B cell (primary cell): ENCODE measurements at regions of chr15 and their contacts with region 1.

Region 1: DNA sequence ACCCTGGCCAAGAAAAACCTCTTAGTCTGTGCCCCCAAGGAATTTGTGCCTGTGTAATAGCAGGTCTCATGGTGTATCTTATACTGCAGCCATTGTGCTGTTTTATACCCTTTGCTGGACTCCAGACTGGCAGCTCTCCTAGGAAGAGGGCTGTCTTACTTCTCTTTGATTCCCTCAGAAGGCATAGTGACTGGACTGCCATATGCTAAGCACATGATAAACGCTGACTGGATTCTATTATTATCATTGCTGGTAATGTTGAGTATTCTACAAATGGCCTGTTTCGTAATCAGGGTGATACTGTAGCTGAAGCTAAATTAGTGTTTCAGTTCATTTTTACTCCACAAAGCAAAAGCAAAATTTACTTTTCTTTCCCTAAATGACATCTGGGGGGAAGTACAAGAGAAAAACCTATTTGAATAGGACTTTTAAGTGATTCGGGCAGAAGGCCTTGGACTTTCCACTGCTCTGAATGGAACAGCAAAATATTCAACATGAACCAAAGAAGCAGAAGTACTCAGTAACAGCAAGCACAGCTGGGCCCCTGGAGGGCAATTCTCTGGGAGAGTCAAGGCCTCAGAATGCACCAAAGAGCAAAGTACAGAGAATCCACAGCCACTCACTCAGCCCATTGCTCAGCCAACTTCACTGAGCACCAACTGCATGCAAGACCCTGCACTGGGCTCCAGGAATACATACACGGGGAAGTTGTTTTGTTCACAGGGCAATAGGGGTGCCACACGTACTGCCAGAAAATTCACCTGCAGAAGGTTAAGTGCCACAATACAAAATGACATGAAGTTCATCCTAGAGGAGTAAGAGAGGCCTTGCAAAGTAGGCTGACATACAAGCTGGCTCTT is 7.9 kb upstream of the BCL2A1 start:
- DNase-seq: peak; percentile 63
- ATAC-seq: peak; percentile 41
- H3K4me3 ChIP-seq: no peak overlapping the region
- H3K4me3 Mint-ChIP-seq: peak overlapping the region; percentile 87
- H3K27ac ChIP-seq: peak overlapping the region; percentile 57 to 79
- H3K27ac Mint-ChIP-seq: peak overlapping the region; percentile 76
- H3K4me1 ChIP-seq: peaks cover 50 to 55% of the 10 kb centered on the region in 2 donors
- H3K4me1 Mint-ChIP-seq: peaks cover 54% of the 10 kb centered on the region
- H3K27me3 ChIP-seq: peaks cover 0 to 3% (median under 1%) of the 10 kb centered on the region in 4 experiments
- H3K27me3 Mint-ChIP-seq: no peaks in the 10 kb centered on the region
- CTCF ChIP-seq: no peak

Region 2: GRCh38 chr15:79962178-79962577 is 16.7 kb before region 1 on chr15:
- CTCF ChIA-PET with region 1: no interaction called
- POLR2A ChIA-PET with region 1: no interaction called
- intact Hi-C with region 1: loop called (anchors 1 kb)
- DNase-seq: peak; percentile 72
- ATAC-seq: peak; percentile 75
- H3K4me3 ChIP-seq: no peak overlapping the region
- H3K4me3 Mint-ChIP-seq: peak overlapping the region; percentile 51
- H3K27ac ChIP-seq: peak overlapping the region; percentile 42 to 82
- H3K27ac Mint-ChIP-seq: peak overlapping the region; percentile 85
- H3K4me1 ChIP-seq: peaks cover 18 to 25% of the 10 kb centered on the region in 2 donors
- H3K4me1 Mint-ChIP-seq: peaks cover 41% of the 10 kb centered on the region
- H3K27me3 ChIP-seq: no peaks in the 10 kb centered on the region
- H3K27me3 Mint-ChIP-seq: no peaks in the 10 kb centered on the region
- CTCF ChIP-seq: no peak

Region 3: DNA sequence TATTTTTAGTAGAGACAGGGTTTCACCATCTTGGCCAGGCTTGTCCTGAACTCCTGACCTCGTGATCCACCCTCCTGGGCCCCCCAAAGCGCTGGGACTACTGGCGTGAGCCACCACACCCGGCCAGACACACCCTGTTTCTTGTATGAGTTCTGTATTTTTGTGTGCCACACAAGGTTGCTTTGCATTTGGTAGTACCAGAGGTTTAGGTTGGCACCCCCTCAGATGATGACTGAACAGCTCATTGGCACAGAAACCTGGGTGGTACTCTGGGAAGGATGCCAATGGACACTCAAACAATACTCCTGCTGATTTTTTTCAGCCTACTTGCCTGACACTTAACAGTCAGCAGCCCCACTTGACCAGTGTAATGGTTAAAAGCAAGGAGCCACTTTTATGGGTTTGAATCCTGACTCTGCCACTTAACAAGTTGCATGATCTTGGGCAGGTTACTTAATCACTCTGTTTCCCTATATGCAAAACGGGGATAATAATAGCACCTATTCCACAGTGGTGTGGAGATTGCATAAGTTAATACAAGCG is 31.3 kb after region 1 on chr15:
- CTCF ChIA-PET with region 1: interaction called, 5 read pairs
- POLR2A ChIA-PET with region 1: interaction called, 3 read pairs
- intact Hi-C with region 1: loop called (anchors 2 kb)
- DNase-seq: no peak
- ATAC-seq: peak; percentile 59
- H3K4me3 ChIP-seq: peak overlapping the region in 2 of 5 experiments; percentile 6 to 38
- H3K4me3 Mint-ChIP-seq: peak overlapping the region; percentile 42
- H3K27ac ChIP-seq: peak overlapping the region; percentile 71 to 76
- H3K27ac Mint-ChIP-seq: peak overlapping the region; percentile 83
- H3K4me1 ChIP-seq: peaks cover 36 to 42% of the 10 kb centered on the region in 2 donors
- H3K4me1 Mint-ChIP-seq: peaks cover 68% of the 10 kb centered on the region
- H3K27me3 ChIP-seq: no peaks in the 10 kb centered on the region
- H3K27me3 Mint-ChIP-seq: no peaks in the 10 kb centered on the region
- CTCF ChIP-seq: no peak

Region 4: DNA sequence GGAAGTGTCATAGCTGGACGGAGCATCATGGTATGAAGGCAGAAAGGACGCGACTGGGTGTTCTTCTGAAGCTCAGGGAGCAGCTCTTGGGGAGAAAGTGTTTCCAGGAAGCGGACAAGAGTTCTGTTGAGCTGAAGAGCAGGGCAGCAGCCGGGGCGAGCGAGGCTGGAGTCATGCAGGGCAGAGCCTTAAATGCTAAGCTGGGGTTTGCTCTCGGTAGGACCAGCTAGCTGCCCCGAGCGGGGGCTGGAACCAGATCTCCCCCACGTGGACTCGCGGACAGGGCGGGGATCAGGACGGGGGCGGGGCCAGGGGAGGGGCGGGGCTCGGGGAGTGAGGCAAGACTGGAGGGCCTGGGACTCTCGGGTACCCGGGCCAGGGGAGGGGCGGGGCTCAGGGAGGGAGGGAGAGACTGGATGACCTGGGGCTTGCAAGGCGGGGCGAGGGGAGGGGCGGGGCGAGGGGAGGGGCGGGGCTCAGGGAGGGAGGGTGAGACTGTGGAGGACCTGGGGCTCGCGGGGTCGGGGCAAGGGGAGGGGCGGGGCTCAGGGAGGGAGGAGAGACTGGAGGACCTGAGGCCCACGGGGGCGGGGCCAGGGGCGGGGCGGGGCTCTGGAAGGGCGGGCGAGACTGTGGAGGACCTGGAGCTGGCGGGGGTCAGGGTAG is 173.4 kb after region 1 on chr15:
- CTCF ChIA-PET with region 1: no interaction called
- POLR2A ChIA-PET with region 1: no interaction called
- intact Hi-C with region 1: loop called (anchors 5 kb)
- DNase-seq: peak; percentile 89
- ATAC-seq: peak; percentile 88
- H3K4me3 ChIP-seq: peak overlapping the region; percentile 6 to 89 (median 77)
- H3K4me3 Mint-ChIP-seq: peak overlapping the region; percentile 81
- H3K27ac ChIP-seq: peak overlapping the region in 1 of 2 donors; percentile 38
- H3K27ac Mint-ChIP-seq: peak overlapping the region; percentile 62
- H3K4me1 ChIP-seq: peaks cover 8 to 11% of the 10 kb centered on the region in 2 donors
- H3K4me1 Mint-ChIP-seq: peaks cover 21% of the 10 kb centered on the region
- H3K27me3 ChIP-seq: no peaks in the 10 kb centered on the region
- H3K27me3 Mint-ChIP-seq: no peaks in the 10 kb centered on the region
- CTCF ChIP-seq: no peak